Endothelial cell of umbilical vein (primary cell): ENCODE measurements at regions of chr22 and their contacts with region 1.

Region 1: GRCh38 chr22:35313311-35314121 is 13.8 kb downstream of the TOM1 start:
- DNase-seq: peak; percentile 93
- H3K4me3 ChIP-seq: no peak overlapping the region
- H3K27ac ChIP-seq: peak overlapping the region; percentile 98
- H3K4me1 ChIP-seq: peaks cover 37% of the 10 kb centered on the region
- H3K27me3 ChIP-seq: no peaks in the 10 kb centered on the region
- CTCF ChIP-seq: no peak
- POLR2A ChIP-seq: no peak

Region 2: GRCh38 chr22:35250156-35250555 is 63.4 kb before region 1 on chr22:
- CTCF ChIA-PET with region 1: no interaction called
- POLR2A ChIA-PET with region 1: no interaction called
- dilution Hi-C with region 1: no loop called
- intact Hi-C with region 1: no loop called
- DNase-seq: no peak
- H3K4me3 ChIP-seq: no peak overlapping the region
- H3K27ac ChIP-seq: no peak overlapping the region
- H3K4me1 ChIP-seq: no peaks in the 10 kb centered on the region
- H3K27me3 ChIP-seq: peaks cover 3 to 8% of the 10 kb centered on the region in 2 experiments
- CTCF ChIP-seq: no peak
- POLR2A ChIP-seq: no peak

Region 3: GRCh38 chr22:35299673-35300497 is 13.6 kb before region 1 on chr22 and contains the start of gene TOM1:
- CTCF ChIA-PET with region 1: interaction called, 8 read pairs
- POLR2A ChIA-PET with region 1: interaction called, 3 read pairs
- dilution Hi-C with region 1: no loop called
- intact Hi-C with region 1: loop called (anchors 1 kb)
- DNase-seq: peak; percentile 99
- H3K4me3 ChIP-seq: peak within 1 kb of the TSS; percentile 74 to 79 (median 75)
- H3K27ac ChIP-seq: peak within 1 kb of the TSS; percentile 88
- H3K4me1 ChIP-seq: peaks cover 3% of the 10 kb centered on the region
- H3K27me3 ChIP-seq: no peaks in the 10 kb centered on the region
- CTCF ChIP-seq: no peak
- POLR2A ChIP-seq: peak; percentile 63
- total RNA-seq, gene TOM1: 36.4 and 44.5 TPM in 2 replicates

Region 4: DNA sequence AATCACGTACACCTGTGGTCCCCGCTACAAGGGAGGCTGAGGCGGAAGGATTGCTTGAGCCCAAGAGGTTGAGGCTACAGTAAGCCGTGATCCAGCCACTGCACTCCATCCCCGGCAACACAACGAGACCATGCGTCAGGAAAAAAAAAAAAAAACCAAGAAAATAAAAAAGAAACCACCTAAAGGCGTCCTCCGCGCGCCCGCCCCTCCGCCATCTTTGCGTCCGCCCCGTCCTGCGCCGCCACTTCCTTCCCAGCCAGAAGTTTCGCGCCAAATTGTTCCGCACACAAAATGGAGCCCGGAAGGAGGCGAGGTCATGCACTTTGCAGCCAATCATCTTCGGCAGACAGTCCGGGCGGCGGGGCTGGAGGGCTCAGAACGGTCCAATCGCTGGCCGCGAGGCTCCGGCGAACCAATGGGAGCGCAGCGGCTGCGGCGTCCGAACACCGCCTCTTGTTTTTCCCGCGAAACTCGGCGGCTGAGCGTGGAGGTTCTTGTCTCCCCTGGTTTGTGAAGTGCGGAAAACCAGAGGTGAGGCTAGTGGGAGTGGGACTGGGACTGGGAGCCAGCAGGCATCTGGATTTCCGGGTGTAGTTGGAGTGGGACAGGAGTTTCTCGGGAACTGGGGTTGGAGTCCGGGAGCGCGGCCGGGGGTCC is 86.3 kb after region 1 on chr22 and contains the start of gene MCM5:
- CTCF ChIA-PET with region 1: no interaction called
- POLR2A ChIA-PET with region 1: no interaction called
- dilution Hi-C with region 1: no loop called
- intact Hi-C with region 1: no loop called
- DNase-seq: peak; percentile 98
- H3K4me3 ChIP-seq: peak within 1 kb of the TSS; percentile 80 to 99 (median 89)
- H3K27ac ChIP-seq: peak within 1 kb of the TSS; percentile 82
- H3K4me1 ChIP-seq: peaks cover 17% of the 10 kb centered on the region
- H3K27me3 ChIP-seq: no peaks in the 10 kb centered on the region
- CTCF ChIP-seq: no peak
- POLR2A ChIP-seq: peak; percentile 67
- total RNA-seq, gene MCM5: 111 and 125 TPM in 2 replicates

Region 5: DNA sequence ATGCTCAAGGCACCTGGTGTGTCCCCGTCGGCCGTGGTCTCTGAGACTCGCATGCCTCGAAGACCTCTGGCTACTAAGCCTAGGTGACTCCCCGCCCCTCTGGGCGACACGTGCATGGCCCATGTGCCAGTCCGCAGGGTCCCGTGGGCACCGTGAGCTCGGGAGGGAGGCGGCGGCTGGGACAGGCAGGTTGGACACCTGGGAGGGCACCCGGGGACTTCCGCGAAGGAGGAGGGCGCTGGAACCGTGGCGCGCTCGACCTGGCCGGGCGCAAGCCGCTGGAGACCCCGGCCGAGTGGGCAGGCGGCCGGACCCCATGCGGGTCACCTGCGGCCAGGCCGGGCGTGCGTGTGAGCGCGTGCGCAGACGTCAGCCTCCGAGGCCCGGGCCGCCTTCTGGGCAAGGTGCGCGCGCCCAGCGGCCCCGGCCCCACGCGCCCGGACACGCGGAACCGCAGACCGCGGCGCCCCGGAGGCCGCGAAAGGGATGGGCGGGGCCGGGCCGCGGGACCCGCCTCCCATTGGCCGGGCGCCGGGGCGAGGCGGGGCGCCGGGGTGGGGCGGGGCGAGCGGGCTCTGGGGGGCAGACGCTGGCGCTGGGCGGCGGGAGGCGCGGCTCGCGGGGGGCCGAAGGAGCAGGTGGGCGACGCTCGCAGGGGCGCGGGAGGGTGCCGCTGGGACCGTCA is 226.5 kb after region 1 on chr22:
- CTCF ChIA-PET with region 1: no interaction called
- POLR2A ChIA-PET with region 1: no interaction called
- dilution Hi-C with region 1: no loop called
- intact Hi-C with region 1: no loop called
- DNase-seq: no peak
- H3K4me3 ChIP-seq: peak overlapping the region in 2 of 3 experiments; percentile 24 to 41
- H3K27ac ChIP-seq: no peak overlapping the region
- H3K4me1 ChIP-seq: peaks cover 14% of the 10 kb centered on the region
- H3K27me3 ChIP-seq: peaks cover 24 to 26% of the 10 kb centered on the region in 2 experiments
- CTCF ChIP-seq: no peak
- POLR2A ChIP-seq: no peak